K562 (cell line): ENCODE measurements at regions of chr4 and their contacts with region 1.

Region 1: DNA sequence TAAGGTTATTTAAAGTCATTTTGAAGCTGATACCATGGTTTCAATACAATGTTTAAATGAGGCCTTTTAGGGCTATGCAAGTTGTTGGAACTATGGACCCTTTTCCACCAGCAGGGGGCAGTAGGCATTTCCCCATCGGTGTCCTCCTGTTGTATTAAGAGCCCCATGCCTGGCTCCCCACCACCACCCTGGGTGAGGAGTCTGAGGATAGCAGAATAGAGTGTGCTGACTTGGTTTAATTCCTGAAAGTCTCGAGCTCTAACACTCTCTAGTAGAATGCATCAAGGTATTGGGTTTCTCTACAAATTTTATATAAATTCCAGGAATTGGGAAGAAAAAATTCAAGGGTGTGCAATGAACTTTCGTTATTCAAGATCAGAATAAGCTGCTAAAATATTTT is 234.8 kb upstream of the JADE1 start:
- DNase-seq: peak; percentile 79 to 89 (median 80)
- ATAC-seq: peak; percentile 96
- H3K4me3 ChIP-seq: no peak overlapping the region
- H3K27ac ChIP-seq: no peak overlapping the region
- H3K4me1 ChIP-seq: peaks cover 6 to 8% of the 10 kb centered on the region in 2 experiments; a peak in 3 of 5 replicates
- H3K27me3 ChIP-seq: no peaks in the 10 kb centered on the region
- CTCF ChIP-seq: peak; percentile 75 to 90 (median 85)
- EP300 ChIP-seq: peak; percentile 11; the same call in 1 of the 2 replicates
- POLR2A ChIP-seq: no peak
- RAD21 ChIP-seq: peak; percentile 84

Region 2: DNA sequence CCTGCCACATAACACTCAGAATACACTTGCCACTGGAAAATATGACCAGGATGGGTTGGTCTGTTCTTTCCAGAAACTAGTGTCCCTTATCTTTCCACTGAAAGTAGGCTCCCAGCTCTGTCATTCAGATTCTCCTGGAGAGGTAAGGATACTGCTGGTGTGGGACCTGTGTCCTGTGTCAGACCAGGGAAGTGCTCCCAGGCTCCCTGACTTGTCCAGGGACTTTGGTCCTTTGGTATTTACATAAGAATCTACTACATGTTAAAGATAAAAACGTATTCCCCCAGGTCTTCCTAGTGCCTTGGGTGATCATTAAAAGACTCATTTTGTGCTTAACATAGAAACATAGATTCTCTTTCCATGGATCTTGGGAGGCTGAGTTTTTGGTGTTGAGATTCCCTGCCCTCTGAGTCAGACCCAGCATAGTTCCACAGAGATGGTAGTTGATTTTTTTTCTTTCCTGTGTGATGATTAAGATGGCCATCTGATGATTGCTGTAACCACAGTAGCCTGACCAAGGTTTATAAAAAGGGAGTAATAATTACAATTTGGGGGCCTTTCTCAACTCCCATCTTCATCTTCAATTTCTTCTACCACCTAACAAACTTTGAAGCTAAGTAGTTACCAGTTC is 75.0 kb after region 1 on chr4:
- CTCF ChIA-PET with region 1: interaction called, 3 read pairs
- POLR2A ChIA-PET with region 1: no interaction called
- in situ Hi-C with region 1: no loop called
- intact Hi-C with region 1: loop called (anchors 1 kb)
- DNase-seq: no peak
- ATAC-seq: no peak
- H3K4me3 ChIP-seq: no peak overlapping the region
- H3K27ac ChIP-seq: no peak overlapping the region
- H3K4me1 ChIP-seq: peaks cover 3 to 5% of the 10 kb centered on the region in 2 experiments; a peak in 2 of 5 replicates
- H3K27me3 ChIP-seq: no peaks in the 10 kb centered on the region
- CTCF ChIP-seq: no peak
- EP300 ChIP-seq: no peak
- POLR2A ChIP-seq: no peak
- RAD21 ChIP-seq: no peak

Region 3: GRCh38 chr4:128871948-128872347 is 297.2 kb after region 1 on chr4:
- CTCF ChIA-PET with region 1: no interaction called
- POLR2A ChIA-PET with region 1: no interaction called
- in situ Hi-C with region 1: loop called (anchors 5 kb)
- intact Hi-C with region 1: no loop called
- DNase-seq: peak in 1 of 4 experiments; percentile 10
- ATAC-seq: no peak
- H3K4me3 ChIP-seq: no peak overlapping the region
- H3K27ac ChIP-seq: no peak overlapping the region
- H3K4me1 ChIP-seq: no peaks in the 10 kb centered on the region
- H3K27me3 ChIP-seq: no peaks in the 10 kb centered on the region
- CTCF ChIP-seq: no peak
- EP300 ChIP-seq: no peak
- POLR2A ChIP-seq: no peak
- RAD21 ChIP-seq: no peak

Region 4: DNA sequence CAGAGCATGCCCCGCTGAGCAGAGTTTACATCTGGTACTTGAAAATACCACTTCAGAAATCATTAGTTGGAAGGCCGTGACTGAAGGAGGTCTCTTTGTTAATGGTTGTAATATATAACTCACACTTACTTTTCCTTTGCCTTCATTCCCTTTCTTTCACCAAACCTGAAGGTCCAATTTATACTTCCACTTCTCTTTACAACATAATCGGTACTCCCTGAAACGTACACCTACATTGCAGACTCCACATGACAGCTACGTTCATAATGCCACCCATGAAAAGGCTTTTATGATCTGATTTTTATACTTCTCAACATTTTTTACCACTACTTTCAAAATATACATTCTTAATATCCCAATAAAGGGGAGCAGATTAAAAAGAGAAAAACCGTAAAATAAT is 819.9 kb after region 1 on chr4:
- CTCF ChIA-PET with region 1: no interaction called
- POLR2A ChIA-PET with region 1: no interaction called
- in situ Hi-C with region 1: no loop called
- intact Hi-C with region 1: no loop called
- DNase-seq: no peak
- ATAC-seq: no peak
- H3K4me3 ChIP-seq: no peak overlapping the region
- H3K27ac ChIP-seq: no peak overlapping the region
- H3K4me1 ChIP-seq: no peaks in the 10 kb centered on the region
- H3K27me3 ChIP-seq: no peaks in the 10 kb centered on the region
- CTCF ChIP-seq: no peak
- EP300 ChIP-seq: no peak
- POLR2A ChIP-seq: no peak
- RAD21 ChIP-seq: no peak